Breast epithelium (tissue), 4 donors: ENCODE measurements at regions of chr5 and their contacts with region 1.

Region 1: DNA sequence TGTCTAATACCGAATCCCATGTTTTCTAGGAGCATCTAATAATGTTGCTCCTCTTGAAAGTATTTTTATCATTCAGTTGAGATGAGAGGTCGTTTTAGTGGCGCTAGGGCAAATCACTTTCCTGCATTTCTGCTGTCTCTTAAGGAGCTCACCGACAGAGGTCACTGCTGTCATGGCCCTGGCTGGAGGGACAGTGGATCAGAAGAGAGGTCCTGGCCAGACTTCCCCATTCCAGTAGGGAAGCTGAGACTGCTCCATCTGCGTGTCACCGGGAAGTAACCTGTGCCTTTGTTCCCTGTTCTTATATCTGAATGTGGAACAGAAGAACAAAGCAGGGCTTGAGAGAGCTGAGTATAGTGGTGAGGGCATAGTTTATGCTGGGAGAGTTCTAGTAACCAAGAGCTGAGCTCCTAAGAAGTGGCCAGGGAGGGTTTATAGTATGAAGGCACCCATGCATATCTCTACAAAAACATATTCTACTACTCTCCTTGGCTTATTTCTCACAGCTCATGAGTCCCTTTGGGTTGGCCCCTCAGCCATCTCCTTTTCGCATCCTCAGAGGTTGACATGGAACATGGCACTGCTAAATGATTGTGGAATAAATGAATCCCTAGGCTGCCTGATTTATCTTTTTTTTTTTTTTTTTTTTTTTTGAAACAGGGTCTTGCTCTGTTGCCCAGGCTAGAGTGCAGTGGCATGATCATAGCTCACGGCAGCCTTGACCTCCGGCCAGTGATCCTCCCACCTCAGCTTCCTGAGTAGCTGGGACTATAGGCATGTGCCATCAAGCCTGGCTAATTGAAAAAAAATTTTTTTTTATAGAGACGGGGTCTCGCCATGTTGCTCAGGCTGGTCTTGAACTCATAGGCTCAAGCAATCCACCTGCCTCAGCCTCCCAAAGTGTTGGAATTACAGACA is 27.2 kb downstream of the ATP6V0E1 start:
- DNase-seq: peak; percentile 56 to 58
- H3K4me3 ChIP-seq: no peak overlapping the region
- H3K27ac ChIP-seq: peak overlapping the region; percentile 64 to 75
- H3K4me1 ChIP-seq: peaks cover 6 to 9% of the 10 kb centered on the region in 2 donors
- H3K27me3 ChIP-seq: no peaks in the 10 kb centered on the region
- CTCF ChIP-seq: peak in 2 of 3 donors; percentile 30 to 45
- POLR2A ChIP-seq: no peak

Region 2: GRCh38 chr5:172999372-172999973 is 11.3 kb before region 1 on chr5:
- intact Hi-C with region 1: no loop called
- DNase-seq: no peak
- H3K4me3 ChIP-seq: no peak overlapping the region
- H3K27ac ChIP-seq: no peak overlapping the region
- H3K4me1 ChIP-seq: no peaks in the 10 kb centered on the region
- H3K27me3 ChIP-seq: no peaks in the 10 kb centered on the region
- CTCF ChIP-seq: no peak
- POLR2A ChIP-seq: no peak

Region 3: DNA sequence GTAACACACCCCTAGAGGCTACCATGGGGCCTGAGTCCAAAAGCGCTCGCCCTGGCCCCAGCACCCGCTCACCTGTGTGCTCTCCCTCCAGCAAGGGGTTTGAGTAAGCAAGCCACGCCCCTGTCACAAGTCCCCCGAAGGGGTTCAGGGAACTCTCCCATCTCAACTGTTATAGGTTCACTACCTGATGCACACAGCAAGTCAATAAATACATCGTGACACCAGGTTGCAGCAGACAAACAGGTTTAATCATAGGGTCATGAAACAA is 37.0 kb after region 1 on chr5:
- intact Hi-C with region 1: loop called (anchors 1 kb)
- DNase-seq: no peak
- H3K4me3 ChIP-seq: no peak overlapping the region
- H3K27ac ChIP-seq: no peak overlapping the region
- H3K4me1 ChIP-seq: no peaks in the 10 kb centered on the region
- H3K27me3 ChIP-seq: no peaks in the 10 kb centered on the region
- CTCF ChIP-seq: no peak
- POLR2A ChIP-seq: no peak